SK-N-SH (cell line): ENCODE measurements at regions of chr18 and their contacts with region 1.

Region 1: GRCh38 chr18:61502472-61502871 is 169.2 kb downstream of the CDH20 start:
- DNase-seq: peak; percentile 69
- H3K4me3 ChIP-seq: peak overlapping the region in 1 of 2 experiments; percentile 20; a peak in 1 of 4 replicates
- H3K27ac ChIP-seq: no peak overlapping the region
- H3K4me1 ChIP-seq: no peaks in the 10 kb centered on the region
- H3K27me3 ChIP-seq: no peaks in the 10 kb centered on the region
- CTCF ChIP-seq: peak; percentile 84
- EP300 ChIP-seq: no peak
- RAD21 ChIP-seq: peak; percentile 97

Region 2: GRCh38 chr18:60684843-60685513 is 817.5 kb before region 1 on chr18:
- CTCF ChIA-PET with region 1: interaction called, 41 read pairs
- POLR2A ChIA-PET with region 1: no interaction called
- DNase-seq: peak; percentile 34
- H3K4me3 ChIP-seq: no peak overlapping the region
- H3K27ac ChIP-seq: no peak overlapping the region
- H3K4me1 ChIP-seq: peaks cover 0 to 3% of the 10 kb centered on the region in 2 experiments; a peak in 1 of 4 replicates
- H3K27me3 ChIP-seq: no peaks in the 10 kb centered on the region
- CTCF ChIP-seq: peak; percentile 76
- EP300 ChIP-seq: no peak
- RAD21 ChIP-seq: peak; percentile 86

Region 3: GRCh38 chr18:60809937-60810336 is 692.5 kb before region 1 on chr18:
- CTCF ChIA-PET with region 1: interaction called, 116 read pairs
- POLR2A ChIA-PET with region 1: no interaction called
- DNase-seq: no peak
- H3K4me3 ChIP-seq: no peak overlapping the region
- H3K27ac ChIP-seq: no peak overlapping the region
- H3K4me1 ChIP-seq: no peaks in the 10 kb centered on the region
- H3K27me3 ChIP-seq: no peaks in the 10 kb centered on the region
- CTCF ChIP-seq: no peak
- EP300 ChIP-seq: no peak
- RAD21 ChIP-seq: no peak

Region 4: GRCh38 chr18:61085761-61086160 is 416.7 kb before region 1 on chr18:
- CTCF ChIA-PET with region 1: interaction called, 10 read pairs
- POLR2A ChIA-PET with region 1: no interaction called
- DNase-seq: no peak
- H3K4me3 ChIP-seq: no peak overlapping the region
- H3K27ac ChIP-seq: no peak overlapping the region
- H3K4me1 ChIP-seq: no peaks in the 10 kb centered on the region
- H3K27me3 ChIP-seq: no peaks in the 10 kb centered on the region
- CTCF ChIP-seq: no peak
- EP300 ChIP-seq: no peak
- RAD21 ChIP-seq: no peak

Region 5: DNA sequence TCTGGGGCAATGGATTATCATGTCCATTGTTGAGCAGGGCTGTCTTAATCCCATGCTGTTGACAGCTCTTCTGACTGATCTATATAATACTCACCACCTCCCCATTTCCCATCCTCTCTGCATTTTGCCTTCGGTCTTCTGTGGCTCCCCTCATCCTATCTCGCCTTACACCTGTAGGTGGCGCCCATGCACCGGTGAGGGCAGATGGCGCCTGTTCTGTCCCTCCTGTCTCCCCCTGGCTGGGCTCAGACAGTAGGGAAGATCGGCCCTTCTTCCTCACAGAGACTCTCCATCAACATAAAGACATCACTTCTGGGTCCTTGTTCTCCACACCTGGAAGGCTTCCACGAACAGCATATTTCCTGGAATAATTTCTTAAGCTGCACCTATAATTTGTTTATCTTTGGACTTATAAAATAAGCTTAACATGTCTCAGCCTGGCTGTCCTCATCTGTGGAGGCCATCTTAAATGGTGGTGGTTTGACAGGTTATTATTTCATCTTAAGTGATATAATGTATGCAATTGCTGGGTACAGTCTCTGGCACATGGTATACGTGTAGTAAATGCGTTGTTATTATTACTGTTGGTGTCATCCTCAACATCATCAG is 180.1 kb before region 1 on chr18:
- CTCF ChIA-PET with region 1: interaction called, 34 read pairs
- POLR2A ChIA-PET with region 1: no interaction called
- DNase-seq: peak; percentile 62
- H3K4me3 ChIP-seq: no peak overlapping the region; a peak in 1 of 4 replicates
- H3K27ac ChIP-seq: no peak overlapping the region
- H3K4me1 ChIP-seq: no peaks in the 10 kb centered on the region
- H3K27me3 ChIP-seq: no peaks in the 10 kb centered on the region
- CTCF ChIP-seq: peak; percentile 90
- EP300 ChIP-seq: no peak
- RAD21 ChIP-seq: peak; percentile 82

Region 6: GRCh38 chr18:61489334-61489733 is 13.1 kb before region 1 on chr18:
- CTCF ChIA-PET with region 1: interaction called, 35 read pairs
- POLR2A ChIA-PET with region 1: no interaction called
- DNase-seq: no peak
- H3K4me3 ChIP-seq: no peak overlapping the region
- H3K27ac ChIP-seq: no peak overlapping the region
- H3K4me1 ChIP-seq: peaks cover 0 to 2% of the 10 kb centered on the region in 2 experiments; a peak in 2 of 4 replicates
- H3K27me3 ChIP-seq: no peaks in the 10 kb centered on the region
- CTCF ChIP-seq: no peak
- EP300 ChIP-seq: no peak
- RAD21 ChIP-seq: no peak